ENCODE measurements at regions of chr13 and their contacts with region 1.

Region 1: DNA sequence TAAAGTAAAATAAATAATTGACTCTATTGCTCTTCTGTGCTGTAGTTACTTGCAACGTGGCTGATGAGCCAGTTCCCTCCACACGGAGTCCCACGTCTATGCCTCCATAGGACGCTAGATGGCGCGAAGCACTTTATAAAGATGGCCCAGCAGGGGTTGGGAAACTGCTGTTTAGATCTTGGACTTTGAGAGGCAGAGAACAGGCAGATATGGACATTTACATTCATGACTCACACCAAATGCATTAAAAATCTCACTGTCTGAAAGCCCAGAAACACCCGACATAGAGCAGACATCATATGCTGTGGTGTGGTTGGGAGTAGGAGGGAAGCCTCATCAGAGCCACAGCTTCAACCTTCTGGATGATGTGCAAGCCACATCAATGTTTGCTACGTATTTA is 643.1 kb upstream of the ARGLU1 start:
- DNase-seq: peak; percentile 97
- ATAC-seq: peak; percentile 97
- H3K4me3 ChIP-seq: no peak overlapping the region
- H3K27ac ChIP-seq: no peak overlapping the region
- H3K4me1 ChIP-seq: peaks cover 5% of the 10 kb centered on the region
- H3K27me3 ChIP-seq: no peaks in the 10 kb centered on the region
- CTCF ChIP-seq: peak; percentile 98
- POLR2A ChIP-seq: no peak
- RAD21 ChIP-seq: peak; percentile 94

Region 2: GRCh38 chr13:107574517-107575210 is 363.6 kb after region 1 on chr13:
- CTCF ChIA-PET with region 1: no interaction called
- POLR2A ChIA-PET with region 1: no interaction called
- dilution Hi-C with region 1: no loop called
- in situ Hi-C with region 1: no loop called
- intact Hi-C with region 1: loop called (anchors 10 kb)
- DNase-seq: peak; percentile 8
- ATAC-seq: no peak; the same call in 1 of the 2 replicates
- H3K4me3 ChIP-seq: no peak overlapping the region
- H3K27ac ChIP-seq: no peak overlapping the region
- H3K4me1 ChIP-seq: no peaks in the 10 kb centered on the region
- H3K27me3 ChIP-seq: no peaks in the 10 kb centered on the region
- CTCF ChIP-seq: no peak
- POLR2A ChIP-seq: no peak
- RAD21 ChIP-seq: no peak

Region 3: DNA sequence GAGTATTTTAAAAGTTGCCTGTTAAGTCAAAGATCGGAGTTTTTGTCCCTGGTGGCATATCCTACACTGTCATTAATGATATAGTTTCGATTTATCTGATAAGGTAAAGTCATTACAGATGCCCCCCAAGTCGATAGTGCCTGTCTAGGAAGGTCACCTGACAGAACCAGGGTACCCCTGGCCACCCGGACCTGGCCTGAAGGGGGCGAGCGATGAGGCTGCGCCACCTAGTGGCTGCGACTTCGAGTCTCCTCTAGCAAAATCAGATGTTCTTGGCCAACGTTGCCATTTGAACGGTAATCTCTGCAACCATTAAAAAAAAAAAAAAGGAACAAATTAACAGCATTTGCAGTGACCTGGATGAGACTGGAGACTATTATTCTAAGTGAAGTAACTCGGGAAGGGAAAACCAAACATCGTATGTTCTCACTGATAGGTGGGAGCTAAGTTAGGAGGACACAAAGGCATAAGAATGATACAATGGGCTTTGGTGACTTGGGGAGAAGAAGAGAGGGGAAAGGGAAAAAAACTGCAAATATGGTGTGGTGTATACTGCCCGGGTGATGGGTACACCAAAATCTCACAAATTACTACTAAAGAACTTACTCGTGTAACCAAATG is 439.1 kb after region 1 on chr13:
- CTCF ChIA-PET with region 1: no interaction called
- POLR2A ChIA-PET with region 1: no interaction called
- dilution Hi-C with region 1: no loop called
- in situ Hi-C with region 1: no loop called
- intact Hi-C with region 1: loop called (anchors 1 kb)
- DNase-seq: peak; percentile 62
- ATAC-seq: peak; percentile 60
- H3K4me3 ChIP-seq: no peak overlapping the region
- H3K27ac ChIP-seq: no peak overlapping the region
- H3K4me1 ChIP-seq: no peaks in the 10 kb centered on the region
- H3K27me3 ChIP-seq: no peaks in the 10 kb centered on the region
- CTCF ChIP-seq: peak; percentile 94
- POLR2A ChIP-seq: no peak
- RAD21 ChIP-seq: peak; percentile 80

Region 4: GRCh38 chr13:108086678-108087077 is 875.6 kb after region 1 on chr13:
- CTCF ChIA-PET with region 1: no interaction called
- POLR2A ChIA-PET with region 1: no interaction called
- dilution Hi-C with region 1: no loop called
- in situ Hi-C with region 1: no loop called
- intact Hi-C with region 1: loop called (anchors 1 kb)
- DNase-seq: peak; percentile 46
- ATAC-seq: peak; percentile 62
- H3K4me3 ChIP-seq: no peak overlapping the region
- H3K27ac ChIP-seq: no peak overlapping the region
- H3K4me1 ChIP-seq: no peaks in the 10 kb centered on the region
- H3K27me3 ChIP-seq: peaks cover 3% of the 10 kb centered on the region; the same call in 1 of the 2 replicates
- CTCF ChIP-seq: peak; percentile 32; the same call in 1 of the 2 replicates
- POLR2A ChIP-seq: no peak
- RAD21 ChIP-seq: peak; percentile 36

Region 5: DNA sequence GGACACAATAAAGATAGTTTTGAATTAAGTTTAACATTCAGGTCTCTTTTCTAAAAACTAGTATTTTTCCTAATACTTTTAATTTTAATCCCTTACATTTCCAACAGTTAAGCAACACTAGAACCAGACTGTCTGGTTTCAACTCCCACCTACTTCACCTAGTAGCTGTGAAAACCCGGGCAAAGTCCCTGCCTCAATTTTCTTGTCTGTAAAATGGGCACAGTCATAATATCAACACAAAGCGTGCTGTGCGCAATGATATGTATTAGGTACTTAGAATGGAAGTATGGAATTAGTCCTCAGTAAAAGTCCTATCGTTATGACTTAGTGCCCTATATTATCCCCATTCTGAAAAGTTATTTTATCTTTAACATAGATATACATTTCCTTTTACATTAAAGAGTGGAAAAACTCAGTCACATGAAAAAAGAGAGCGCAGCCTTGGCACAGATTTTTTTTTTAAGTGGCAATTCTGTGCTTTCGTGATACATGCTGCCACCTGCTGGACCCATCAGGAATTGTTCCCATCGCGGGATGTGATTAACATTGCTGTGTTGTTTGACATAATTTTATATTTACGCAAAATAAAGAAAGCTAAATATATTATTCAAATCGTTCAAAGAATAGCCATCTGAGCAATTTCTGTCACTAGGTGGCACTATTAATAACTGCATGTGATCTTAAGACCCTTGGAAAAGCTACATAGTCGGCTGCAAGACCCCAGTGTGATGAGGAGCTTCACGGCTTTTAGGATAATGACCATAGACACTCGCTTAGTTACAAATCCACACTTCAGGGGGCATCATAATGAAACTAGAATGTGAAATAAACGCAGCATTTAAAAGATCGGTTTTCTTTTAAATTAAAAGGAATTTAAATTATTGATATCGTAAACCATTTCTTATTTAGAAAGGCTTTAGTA is 944.4 kb after region 1 on chr13:
- CTCF ChIA-PET with region 1: interaction called, 4 read pairs
- POLR2A ChIA-PET with region 1: no interaction called
- dilution Hi-C with region 1: no loop called
- in situ Hi-C with region 1: loop called (anchors 5 kb)
- intact Hi-C with region 1: loop called (anchors 1 kb)
- DNase-seq: peak; percentile 52
- ATAC-seq: peak; percentile 65; the same call in 1 of the 2 replicates
- H3K4me3 ChIP-seq: no peak overlapping the region
- H3K27ac ChIP-seq: no peak overlapping the region
- H3K4me1 ChIP-seq: no peaks in the 10 kb centered on the region
- H3K27me3 ChIP-seq: peaks cover 2% of the 10 kb centered on the region
- CTCF ChIP-seq: peak; percentile 85
- POLR2A ChIP-seq: no peak
- RAD21 ChIP-seq: peak; percentile 78

Measured in IMR-90 (cell line).